ENCODE measurements at regions of chr22 and their contacts with region 1.

Region 1: DNA sequence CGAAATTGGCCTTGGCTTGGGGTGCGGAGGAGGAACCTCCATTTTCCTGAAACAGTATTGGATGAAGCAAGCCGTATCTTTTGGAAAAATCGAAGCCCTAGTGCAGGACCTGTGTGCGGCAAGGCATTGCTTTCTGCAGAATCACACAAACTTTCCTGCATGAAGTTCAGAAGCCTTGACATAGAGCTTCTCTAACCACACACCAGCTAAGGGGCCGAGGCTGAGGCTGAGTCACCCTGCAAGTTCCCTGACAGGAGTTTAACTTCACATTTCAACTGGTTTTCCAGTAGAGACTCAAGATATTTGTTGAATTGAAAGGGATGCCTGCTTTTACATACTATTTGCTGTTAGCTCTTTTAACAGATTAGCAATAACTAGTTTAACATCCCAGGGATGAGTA is 67.8 kb downstream of the TCF20 start:
- DNase-seq: peak; percentile 48
- H3K4me3 Mint-ChIP-seq: peak overlapping the region; percentile 79
- H3K27ac Mint-ChIP-seq: peak overlapping the region; percentile 77
- H3K4me1 Mint-ChIP-seq: peaks cover 39% of the 10 kb centered on the region
- H3K27me3 Mint-ChIP-seq: no peaks in the 10 kb centered on the region

Region 2: GRCh38 chr22:41642331-41643110 is 560.1 kb before region 1 on chr22:
- intact Hi-C with region 1: no loop called
- DNase-seq: no peak
- H3K4me3 Mint-ChIP-seq: no peak overlapping the region
- H3K27ac Mint-ChIP-seq: no peak overlapping the region
- H3K4me1 Mint-ChIP-seq: peaks cover 11% of the 10 kb centered on the region
- H3K27me3 Mint-ChIP-seq: no peaks in the 10 kb centered on the region

Region 3: DNA sequence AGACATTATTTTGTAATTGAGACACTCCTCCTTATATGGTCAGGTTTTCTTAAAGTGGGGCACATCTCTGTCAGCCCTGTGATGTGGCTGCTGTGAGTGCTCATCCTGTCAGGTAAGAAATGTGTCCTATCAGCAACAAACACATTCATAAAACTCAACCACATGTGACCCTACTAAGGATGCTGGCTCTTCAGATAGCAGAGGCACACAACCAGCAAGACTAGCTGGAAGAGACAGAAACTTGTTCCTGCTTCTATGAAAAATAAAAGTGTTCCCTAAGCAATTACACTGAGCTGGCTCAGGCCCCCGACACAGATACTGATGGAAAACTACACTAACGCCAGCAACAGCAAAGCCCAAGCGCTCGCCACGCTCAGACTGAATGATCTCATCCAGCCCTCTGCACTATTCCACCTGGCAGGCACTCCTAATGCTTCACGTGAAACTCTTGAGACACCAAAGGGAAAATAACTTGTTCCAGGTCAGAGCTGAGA is 22.3 kb before region 1 on chr22:
- intact Hi-C with region 1: loop called (anchors 2 kb)
- DNase-seq: peak; percentile 32
- H3K4me3 Mint-ChIP-seq: peak overlapping the region; percentile 12
- H3K27ac Mint-ChIP-seq: peak overlapping the region; percentile 50
- H3K4me1 Mint-ChIP-seq: peaks cover 84% of the 10 kb centered on the region
- H3K27me3 Mint-ChIP-seq: no peaks in the 10 kb centered on the region

Region 4: GRCh38 chr22:42192547-42192946 is 10.1 kb before region 1 on chr22:
- intact Hi-C with region 1: loop called (anchors 1 kb)
- DNase-seq: no peak
- H3K4me3 Mint-ChIP-seq: no peak overlapping the region
- H3K27ac Mint-ChIP-seq: peak overlapping the region; percentile 3
- H3K4me1 Mint-ChIP-seq: peaks cover 60% of the 10 kb centered on the region
- H3K27me3 Mint-ChIP-seq: no peaks in the 10 kb centered on the region

Region 5: DNA sequence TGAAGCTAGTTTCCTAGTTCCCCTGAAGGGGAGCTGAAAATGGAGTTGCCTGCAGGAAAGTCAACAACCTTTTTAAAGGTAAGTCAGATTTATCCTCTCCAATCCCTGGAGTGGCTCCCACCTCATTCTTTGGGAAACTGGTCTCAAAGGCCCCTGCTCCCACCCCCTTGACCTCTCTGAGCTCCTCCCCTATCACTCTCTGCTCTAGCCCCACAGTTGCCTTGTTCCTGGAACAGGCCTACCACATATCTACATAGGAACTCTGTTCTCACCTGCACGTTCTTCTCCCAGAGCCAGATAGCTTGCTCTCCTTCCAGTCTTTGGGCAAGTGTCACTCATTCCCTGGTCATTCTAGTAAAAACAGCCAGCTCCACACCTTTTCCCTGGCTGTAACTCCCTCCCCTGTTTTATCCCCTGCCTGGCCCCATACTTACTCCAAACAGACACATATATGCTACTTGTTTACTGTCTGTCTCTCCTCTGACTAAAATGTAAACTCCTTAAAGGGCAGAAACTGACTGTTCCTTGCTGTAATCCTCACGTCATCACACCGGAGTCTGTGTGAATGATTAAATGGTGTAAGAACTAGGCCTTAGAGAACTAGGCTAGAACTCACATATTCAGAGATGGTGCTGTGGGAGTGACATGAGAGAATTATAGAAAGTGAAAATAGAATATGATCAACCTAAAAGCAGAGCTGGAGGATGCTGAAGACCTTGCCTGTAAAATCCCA is 14.5 kb after region 1 on chr22:
- intact Hi-C with region 1: loop called (anchors 2 kb)
- DNase-seq: no peak
- H3K4me3 Mint-ChIP-seq: peak overlapping the region; percentile 2
- H3K27ac Mint-ChIP-seq: peak overlapping the region; percentile 90
- H3K4me1 Mint-ChIP-seq: peaks cover 29% of the 10 kb centered on the region
- H3K27me3 Mint-ChIP-seq: no peaks in the 10 kb centered on the region

Region 6: GRCh38 chr22:42269407-42270177 is 66.9 kb after region 1 on chr22:
- intact Hi-C with region 1: loop called (anchors 5 kb)
- DNase-seq: peak; percentile 67
- H3K4me3 Mint-ChIP-seq: peak overlapping the region; percentile 90
- H3K27ac Mint-ChIP-seq: peak overlapping the region; percentile 87
- H3K4me1 Mint-ChIP-seq: peaks cover 37% of the 10 kb centered on the region
- H3K27me3 Mint-ChIP-seq: no peaks in the 10 kb centered on the region

Measured in activated T-helper 1 cell treated with anti-CD3 and anti-CD28 coated beads, Interleukin-12 subunit alpha, Interleukin-12 subunit beta, Interleukin-2, Interleukin-4 antibody, amounts not matched to agents 30 ng/mL and 10 ng/mL and 1 ng/mL, durations not matched to agents 14 hours and 24 hours and 36 hours (primary cell).